ENCODE measurements at regions of chr1 and their contacts with region 1.

Region 1: DNA sequence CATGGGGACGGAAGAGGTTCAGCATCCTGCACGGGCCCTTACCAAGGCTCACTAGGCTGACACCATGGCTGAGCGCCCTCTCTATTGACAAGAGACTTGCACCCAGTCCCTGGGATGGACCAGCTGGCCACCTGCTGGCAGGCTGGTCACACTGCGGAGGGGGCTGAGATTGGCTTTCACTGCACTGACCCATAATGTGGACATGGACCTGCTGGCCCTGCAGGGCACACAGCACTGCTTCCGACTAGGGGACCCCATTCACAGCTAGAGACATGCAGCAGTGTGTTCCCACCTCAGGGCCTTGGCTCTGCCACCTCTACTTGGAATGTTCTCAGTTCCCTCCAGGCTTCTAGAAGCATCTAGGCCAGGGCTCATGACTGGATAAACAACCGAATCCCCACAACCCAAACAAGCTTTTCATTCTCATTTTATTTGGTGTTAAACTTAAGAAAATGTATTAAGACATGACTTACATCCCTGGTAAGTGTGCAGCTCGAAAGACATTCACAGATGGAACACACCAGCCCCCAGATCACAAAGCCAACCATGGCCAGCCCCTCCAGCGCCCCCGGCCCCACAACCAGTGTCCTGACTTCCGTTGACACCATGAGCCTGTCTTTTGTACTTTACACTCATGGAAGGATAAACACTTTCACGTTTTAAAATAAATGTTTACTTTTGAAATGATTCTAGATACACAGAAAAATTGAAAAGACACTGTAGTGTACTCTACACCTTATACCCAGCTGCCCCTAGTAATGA is 9.3 kb upstream of the SRARP start:
- DNase-seq: peak; percentile 75
- ATAC-seq: peak; percentile 91

Region 2: GRCh38 chr1:15799004-15799936 is 195.5 kb before region 1 on chr1:
- intact Hi-C with region 1: loop called (anchors 5 kb)
- DNase-seq: peak; percentile 71
- ATAC-seq: peak; percentile 62

Region 3: GRCh38 chr1:15816674-15817073 is 178.1 kb before region 1 on chr1:
- intact Hi-C with region 1: loop called (anchors 5 kb)
- DNase-seq: no peak
- ATAC-seq: no peak

Region 4: DNA sequence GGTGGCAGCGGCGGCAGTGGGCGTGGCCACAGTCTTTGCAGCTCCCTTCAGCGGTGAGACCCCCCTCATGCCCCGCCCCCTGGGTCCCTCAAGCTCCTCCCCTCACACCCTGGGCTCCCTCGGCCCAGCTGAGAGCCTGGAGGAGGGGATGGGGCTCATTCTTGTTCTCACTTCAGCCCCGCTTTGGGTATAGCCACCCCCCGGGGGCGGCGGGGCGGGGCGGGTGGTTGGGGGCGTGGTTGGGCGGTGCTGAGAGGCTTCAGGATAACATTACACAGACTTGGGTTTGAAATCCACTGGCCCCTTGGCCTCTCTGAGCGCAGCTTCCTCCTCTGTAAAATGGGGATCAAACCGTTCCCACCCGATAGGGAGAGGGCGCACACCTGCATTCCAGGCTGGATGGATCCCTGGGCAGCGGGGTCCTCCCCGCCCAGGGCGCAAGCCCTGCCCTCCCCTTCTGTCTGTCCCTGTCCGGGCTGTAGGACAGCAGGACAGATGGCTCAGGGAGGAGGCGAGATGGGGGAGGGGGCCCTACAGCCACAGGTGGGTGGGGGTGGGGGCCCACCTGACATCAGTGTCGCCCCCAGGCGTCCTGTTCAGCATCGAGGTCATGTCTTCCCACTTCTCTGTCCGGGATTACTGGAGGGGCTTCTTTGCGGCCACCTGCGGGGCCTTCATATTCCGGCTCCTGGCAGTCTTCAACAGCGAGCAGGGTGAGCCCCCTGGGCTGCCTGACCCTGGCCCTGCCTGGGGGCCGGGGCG is 32.1 kb after region 1 on chr1:
- intact Hi-C with region 1: no loop called
- DNase-seq: no peak
- ATAC-seq: peak; percentile 32

Region 5: GRCh38 chr1:16187748-16188401 is 193.1 kb after region 1 on chr1:
- intact Hi-C with region 1: loop called (anchors 10 kb)
- DNase-seq: peak; percentile 89
- ATAC-seq: peak; percentile 88

Measured in Right ventricle myocardium superior (tissue), 1 donor.